PC-3 (cell line): ENCODE measurements at regions of chrX and their contacts with region 1.

Region 1: DNA sequence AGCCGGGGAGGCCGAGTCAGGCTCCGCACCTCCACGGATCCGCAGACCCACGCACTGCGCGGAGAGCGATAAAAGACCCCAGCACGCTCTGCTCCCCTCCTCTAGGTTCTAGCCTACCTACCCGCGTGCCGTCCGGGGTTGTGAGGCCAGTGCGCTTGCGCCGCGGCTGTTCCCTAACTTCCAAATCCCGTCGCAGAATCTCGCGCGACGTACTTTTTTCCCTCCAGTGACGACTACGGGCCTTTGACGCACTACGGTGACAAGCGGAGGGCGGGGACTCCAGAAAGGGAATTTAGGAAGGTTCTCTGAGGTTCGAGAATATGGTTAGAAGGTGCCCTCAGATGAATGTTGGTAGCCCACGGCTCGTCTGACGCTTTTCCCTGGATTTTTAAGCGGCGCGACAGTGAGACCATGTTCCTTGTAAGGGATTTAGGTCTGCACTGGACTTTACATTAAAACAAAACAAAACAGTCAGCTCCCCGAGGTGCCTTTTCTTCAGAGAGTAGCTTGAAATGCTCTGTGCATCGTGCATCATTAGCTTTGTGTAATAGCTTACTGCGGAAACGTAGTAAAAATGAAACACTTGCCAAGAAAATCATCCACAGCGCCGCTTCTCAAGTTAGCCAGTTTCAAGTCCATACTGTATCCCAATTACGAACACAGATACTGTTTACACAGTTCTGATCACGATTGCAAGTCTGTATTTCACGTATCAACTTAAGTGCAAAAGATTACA is at the start of gene NKRF:
- DNase-seq: peak; percentile 95
- ATAC-seq: peak; percentile 78
- H3K4me3 ChIP-seq: peak within 1 kb of the TSS; percentile 93
- H3K27ac ChIP-seq: peak within 1 kb of the TSS; percentile 60
- H3K4me1 ChIP-seq: peaks cover 20% of the 10 kb centered on the region
- H3K27me3 ChIP-seq: no peaks in the 10 kb centered on the region
- CTCF ChIP-seq: no peak
- total RNA-seq, gene NKRF: 9.1 and 11.4 TPM in 2 replicates

Region 2: GRCh38 chrX:119468930-119469635 is 137.4 kb before region 1 on chrX:
- CTCF ChIA-PET with region 1: no interaction called
- POLR2A ChIA-PET with region 1: no interaction called
- intact Hi-C with region 1: no loop called
- DNase-seq: peak; percentile 83
- ATAC-seq: peak; percentile 68
- H3K4me3 ChIP-seq: peak overlapping the region; percentile 98
- H3K27ac ChIP-seq: peak overlapping the region; percentile 72
- H3K4me1 ChIP-seq: peaks cover 8% of the 10 kb centered on the region
- H3K27me3 ChIP-seq: no peaks in the 10 kb centered on the region
- CTCF ChIP-seq: peak; percentile 64

Region 3: DNA sequence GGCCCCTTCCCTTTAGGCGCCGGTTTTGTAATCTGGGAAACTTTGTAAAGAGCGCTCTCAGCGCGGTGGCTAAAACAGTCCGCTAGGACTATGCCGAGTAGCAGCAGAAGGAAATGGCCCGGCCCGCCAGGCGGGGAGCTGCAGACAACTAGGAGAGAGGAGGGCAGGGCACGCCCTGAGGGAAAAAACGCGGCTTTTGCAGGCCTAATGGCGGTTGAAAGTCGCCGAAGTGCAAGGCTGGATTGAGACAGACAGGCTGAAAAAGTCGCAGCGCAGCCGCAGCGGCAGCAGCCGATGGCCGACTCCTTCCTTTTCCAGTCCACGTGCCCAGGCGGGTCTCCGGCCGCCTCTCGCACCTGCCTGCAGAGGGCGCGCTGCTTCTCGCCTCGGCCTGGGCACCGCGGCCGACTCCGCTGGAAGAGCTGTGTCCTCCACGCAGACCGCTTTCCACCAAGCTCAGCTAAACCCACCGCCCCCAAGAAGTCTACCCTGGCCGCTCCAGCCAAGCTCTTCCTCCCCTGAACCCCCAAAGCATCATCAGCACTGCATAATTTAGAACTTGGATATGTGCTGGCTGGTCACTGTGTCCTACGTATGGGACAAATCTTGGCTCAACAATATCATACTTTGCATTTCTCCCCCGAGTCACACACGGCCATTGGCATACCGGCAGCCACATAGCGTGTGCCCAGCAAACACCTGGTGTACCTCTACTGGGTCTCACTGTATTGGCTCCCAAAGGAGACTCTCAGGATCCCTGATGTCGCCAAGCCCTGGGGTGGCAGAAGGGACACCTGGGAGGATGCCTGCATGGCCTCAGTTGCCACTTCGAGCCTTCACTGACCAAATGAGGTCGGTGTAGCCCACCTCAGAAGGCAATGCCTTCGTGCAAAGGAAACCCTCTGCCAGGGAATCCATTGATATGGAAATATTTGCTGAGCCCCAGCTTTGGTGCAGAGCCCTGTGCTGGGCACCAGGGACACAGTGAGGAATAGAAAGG is 123.7 kb before region 1 on chrX:
- CTCF ChIA-PET with region 1: interaction called, 14 read pairs
- POLR2A ChIA-PET with region 1: no interaction called
- intact Hi-C with region 1: no loop called
- DNase-seq: peak; percentile 45
- ATAC-seq: peak; percentile 83
- H3K4me3 ChIP-seq: peak overlapping the region; percentile 59
- H3K27ac ChIP-seq: no peak overlapping the region
- H3K4me1 ChIP-seq: no peaks in the 10 kb centered on the region
- H3K27me3 ChIP-seq: no peaks in the 10 kb centered on the region
- CTCF ChIP-seq: peak; percentile 71

Region 4: GRCh38 chrX:119583431-119584059 is 22.9 kb before region 1 on chrX:
- CTCF ChIA-PET with region 1: no interaction called
- POLR2A ChIA-PET with region 1: interaction called, 20 read pairs
- intact Hi-C with region 1: no loop called
- DNase-seq: no peak
- ATAC-seq: no peak
- H3K4me3 ChIP-seq: no peak overlapping the region
- H3K27ac ChIP-seq: no peak overlapping the region
- H3K4me1 ChIP-seq: no peaks in the 10 kb centered on the region
- H3K27me3 ChIP-seq: no peaks in the 10 kb centered on the region
- CTCF ChIP-seq: no peak

Region 5: GRCh38 chrX:119729408-119730201 is 123.2 kb after region 1 on chrX:
- CTCF ChIA-PET with region 1: interaction called, 6 read pairs
- POLR2A ChIA-PET with region 1: no interaction called
- intact Hi-C with region 1: loop called (anchors 1 kb)
- DNase-seq: peak; percentile 74
- ATAC-seq: peak; percentile 68
- H3K4me3 ChIP-seq: no peak overlapping the region
- H3K27ac ChIP-seq: no peak overlapping the region
- H3K4me1 ChIP-seq: no peaks in the 10 kb centered on the region
- H3K27me3 ChIP-seq: no peaks in the 10 kb centered on the region
- CTCF ChIP-seq: peak; percentile 66

Region 6: DNA sequence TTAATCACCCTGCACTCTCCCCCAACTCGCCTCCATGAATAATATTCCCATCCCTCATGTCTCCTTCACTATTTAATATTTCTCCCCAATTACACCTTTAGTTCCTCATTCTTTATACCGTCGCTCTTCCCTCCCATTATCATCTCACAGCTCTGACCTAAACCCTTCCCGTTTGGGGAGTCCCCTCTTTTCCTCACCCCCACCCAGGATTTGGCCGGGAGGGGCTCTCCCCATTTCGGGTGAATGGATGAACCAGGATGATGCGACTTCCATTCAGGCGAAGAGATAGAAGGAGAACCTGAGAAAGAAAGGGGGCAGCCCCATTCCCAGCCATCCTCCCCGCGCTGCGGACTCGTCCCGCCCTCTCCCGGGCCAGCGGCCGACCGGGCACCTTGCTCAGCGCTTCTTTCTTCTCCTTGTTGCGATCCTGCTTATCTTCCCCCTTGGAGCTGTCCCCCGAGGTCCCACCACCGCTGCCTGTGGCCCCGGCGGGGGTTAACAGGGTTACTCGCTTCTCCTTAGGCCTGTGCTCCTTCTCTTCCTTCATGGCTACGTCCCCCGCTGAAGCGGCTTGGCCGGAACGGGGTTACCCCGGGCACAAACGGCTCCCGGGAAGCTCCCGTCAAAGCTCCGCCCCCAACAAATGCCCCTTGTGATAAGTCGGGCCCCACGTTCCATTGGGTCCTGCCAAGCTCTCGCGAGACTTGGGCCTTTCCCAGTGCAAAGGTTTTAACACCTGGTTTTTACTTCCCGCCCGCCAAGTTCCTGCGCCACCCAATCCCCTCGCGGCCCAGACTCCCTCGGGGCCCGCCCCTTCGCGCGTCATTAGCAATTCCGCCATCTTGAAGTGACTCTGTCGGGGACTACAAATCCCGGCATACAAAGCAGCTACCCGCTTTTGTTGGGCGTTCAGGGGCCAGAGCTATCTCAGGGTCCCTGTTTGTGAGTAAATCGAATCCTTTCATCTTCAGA is 246.2 kb after region 1 on chrX and contains the start of gene UPF3B:
- CTCF ChIA-PET with region 1: interaction called, 10 read pairs
- POLR2A ChIA-PET with region 1: no interaction called
- intact Hi-C with region 1: no loop called
- DNase-seq: peak; percentile 98
- ATAC-seq: peak; percentile 94
- H3K4me3 ChIP-seq: peak within 1 kb of the TSS; percentile 100
- H3K27ac ChIP-seq: peak within 1 kb of the TSS; percentile 55
- H3K4me1 ChIP-seq: peaks cover 6% of the 10 kb centered on the region; the same call in 1 of the 2 replicates
- H3K27me3 ChIP-seq: no peaks in the 10 kb centered on the region
- CTCF ChIP-seq: no peak
- total RNA-seq, gene UPF3B: 4.7 and 8.1 TPM in 2 replicates